T-cell (primary cell): ENCODE measurements at regions of chr18 and their contacts with region 1.

Region 1: GRCh38 chr18:56645415-56646016 is 5.6 kb upstream of the WDR7 start:
- DNase-seq: peak in 3 of 35 experiments; percentile 15 to 59 (median 15)
- ATAC-seq: peak in 1 of 4 experiments; percentile 56
- H3K4me3 ChIP-seq: no peak overlapping the region
- H3K4me3 Mint-ChIP-seq: no peak overlapping the region
- H3K27ac ChIP-seq: no peak overlapping the region
- H3K27ac Mint-ChIP-seq: no peak overlapping the region
- H3K4me1 ChIP-seq: peaks cover 0 to 2% of the 10 kb centered on the region in 2 experiments
- H3K4me1 Mint-ChIP-seq: peaks cover 2 to 18% (median 18%) of the 10 kb centered on the region in 3 donors
- H3K27me3 ChIP-seq: no peaks in the 10 kb centered on the region
- H3K27me3 Mint-ChIP-seq: no peaks in the 10 kb centered on the region

Region 2: DNA sequence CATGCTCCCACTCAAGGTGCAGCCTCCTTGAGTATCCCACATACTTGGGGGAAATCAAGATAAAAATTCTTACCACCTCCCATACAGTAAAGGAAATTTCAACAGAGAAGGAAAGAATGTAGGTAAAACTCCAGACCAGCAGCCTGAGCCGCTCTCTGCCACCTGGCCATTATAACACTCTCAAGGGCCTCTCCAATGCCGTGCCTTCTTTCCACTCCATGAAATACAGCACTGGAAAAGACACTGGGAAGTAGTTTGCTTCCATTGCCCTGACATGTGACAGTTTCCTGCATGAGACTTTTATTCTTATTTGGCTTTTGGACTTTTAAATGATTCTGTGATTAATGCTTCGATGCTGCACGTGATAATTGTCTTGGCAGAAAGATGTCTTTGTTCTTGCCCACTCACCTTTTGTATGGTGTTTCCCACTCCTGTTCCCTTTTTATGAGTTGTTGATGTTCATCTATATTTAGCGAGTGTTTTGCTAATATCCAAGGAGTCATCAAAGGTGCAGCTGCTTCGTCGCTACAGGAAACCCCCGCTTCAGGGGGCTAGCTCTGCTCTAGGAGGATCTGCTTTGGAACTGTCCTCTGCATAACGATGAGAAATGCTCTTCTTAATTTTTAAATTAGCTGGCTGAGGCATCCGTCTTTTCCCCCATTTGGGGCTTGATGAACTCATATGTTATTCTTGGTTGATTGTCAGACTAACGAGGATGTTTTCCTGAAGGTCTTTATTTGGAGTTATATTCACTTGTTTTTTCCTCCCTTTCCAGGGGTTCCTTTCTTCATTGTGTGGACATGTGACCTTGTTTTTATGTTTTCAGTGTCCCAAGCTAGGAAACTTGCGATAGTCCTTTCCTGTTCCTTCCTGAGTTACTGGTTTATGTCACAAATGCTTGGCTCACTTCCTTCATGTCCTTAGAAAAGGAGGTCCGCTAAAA is 186.5 kb before region 1 on chr18:
- CTCF ChIA-PET with region 1: no interaction called
- POLR2A ChIA-PET with region 1: no interaction called
- DNase-seq: no peak
- ATAC-seq: no peak
- H3K4me3 ChIP-seq: no peak overlapping the region
- H3K4me3 Mint-ChIP-seq: no peak overlapping the region
- H3K27ac ChIP-seq: no peak overlapping the region
- H3K27ac Mint-ChIP-seq: no peak overlapping the region
- H3K4me1 ChIP-seq: no peaks in the 10 kb centered on the region
- H3K4me1 Mint-ChIP-seq: no peaks in the 10 kb centered on the region
- H3K27me3 ChIP-seq: no peaks in the 10 kb centered on the region
- H3K27me3 Mint-ChIP-seq: peaks cover 0 to 14% of the 10 kb centered on the region in 2 donors

Region 3: DNA sequence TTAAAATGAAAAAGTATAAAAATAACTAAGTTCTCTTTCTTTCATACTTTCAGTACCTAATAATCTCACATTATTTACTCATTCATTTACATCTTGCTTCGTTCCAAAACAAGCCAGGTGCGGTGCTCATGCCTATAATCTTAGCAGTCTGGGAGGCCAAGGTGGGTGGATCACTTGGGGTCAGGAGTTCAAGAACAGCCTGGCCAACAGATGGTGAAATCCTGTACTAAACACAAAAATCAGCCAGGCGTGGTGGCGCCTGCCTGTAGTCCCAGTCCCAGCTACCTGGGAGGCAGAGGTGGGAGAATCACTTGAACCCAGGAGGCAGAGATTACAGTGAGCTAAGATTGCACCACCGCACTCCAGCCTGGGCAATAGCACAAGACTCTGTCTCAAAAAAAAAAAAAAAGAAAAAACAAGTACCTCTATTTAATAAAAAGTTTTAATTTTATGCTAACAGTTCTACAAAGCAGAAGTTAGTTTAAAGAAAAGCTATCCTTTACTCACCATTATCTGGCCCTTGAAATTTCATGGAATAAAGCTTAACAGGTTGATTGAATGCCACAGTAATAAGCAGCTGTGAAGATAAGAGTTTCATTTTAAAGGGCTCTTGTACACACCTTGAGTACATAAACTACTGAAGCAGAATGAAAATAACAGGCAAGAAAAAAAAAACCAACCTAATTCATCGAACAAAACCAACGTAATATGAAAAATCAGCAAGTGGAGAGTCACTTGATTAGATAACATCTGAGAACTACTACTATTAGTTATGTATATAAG is 29.6 kb before region 1 on chr18:
- CTCF ChIA-PET with region 1: interaction called in 1 of 2 experiments, 3 read pairs
- POLR2A ChIA-PET with region 1: interaction called in 1 of 2 experiments, 15 read pairs
- DNase-seq: no peak
- ATAC-seq: no peak
- H3K4me3 ChIP-seq: no peak overlapping the region
- H3K4me3 Mint-ChIP-seq: no peak overlapping the region
- H3K27ac ChIP-seq: no peak overlapping the region
- H3K27ac Mint-ChIP-seq: no peak overlapping the region
- H3K4me1 ChIP-seq: no peaks in the 10 kb centered on the region
- H3K4me1 Mint-ChIP-seq: peaks cover 0 to 9% (median 2%) of the 10 kb centered on the region in 3 donors
- H3K27me3 ChIP-seq: no peaks in the 10 kb centered on the region
- H3K27me3 Mint-ChIP-seq: no peaks in the 10 kb centered on the region

Region 4: GRCh38 chr18:56709463-56709862 is 63.9 kb after region 1 on chr18:
- CTCF ChIA-PET with region 1: interaction called, 4 to 11 read pairs
- POLR2A ChIA-PET with region 1: no interaction called
- DNase-seq: peak in 22 of 35 experiments; percentile 1 to 69 (median 10)
- ATAC-seq: peak; percentile 100
- H3K4me3 ChIP-seq: no peak overlapping the region
- H3K4me3 Mint-ChIP-seq: no peak overlapping the region
- H3K27ac ChIP-seq: no peak overlapping the region
- H3K27ac Mint-ChIP-seq: no peak overlapping the region
- H3K4me1 ChIP-seq: no peaks in the 10 kb centered on the region
- H3K4me1 Mint-ChIP-seq: peaks cover 3 to 6% (median 6%) of the 10 kb centered on the region in 3 donors
- H3K27me3 ChIP-seq: no peaks in the 10 kb centered on the region
- H3K27me3 Mint-ChIP-seq: no peaks in the 10 kb centered on the region